Activated B cell treated with CpG ODN at 0.5 μM for 24 hours (primary cell): ENCODE measurements at regions of chr5 and their contacts with region 1.

Region 1: DNA sequence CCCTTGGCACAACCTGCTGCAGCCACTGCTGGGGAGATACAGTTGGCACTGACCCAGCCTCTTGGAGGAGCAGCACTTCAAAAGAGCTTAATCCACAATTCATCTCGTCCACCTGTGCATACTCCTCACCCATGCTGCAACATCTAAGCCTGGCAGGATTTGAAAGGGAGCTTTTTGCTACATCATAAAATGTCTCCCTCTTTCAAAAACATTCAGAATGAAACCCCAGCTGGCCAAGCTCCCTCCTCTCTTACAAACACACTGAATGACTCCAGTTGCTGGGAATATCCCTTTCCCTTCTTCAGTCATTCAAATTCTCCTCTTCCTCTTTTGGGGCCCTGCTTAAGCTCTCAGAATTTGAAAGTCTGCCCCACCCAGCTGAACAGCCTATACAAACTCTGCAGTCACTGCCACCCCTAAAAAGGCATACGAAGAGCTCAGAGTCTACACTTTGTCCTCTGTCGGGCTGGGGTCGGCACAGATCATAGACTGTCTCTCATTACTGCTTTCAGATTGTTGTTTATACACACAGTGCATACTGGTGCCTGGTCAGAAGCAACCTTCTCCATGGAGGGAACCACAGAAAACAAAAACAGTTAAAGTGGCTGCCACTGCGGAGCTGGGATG is 8.8 kb upstream of the C5orf15 start:
- DNase-seq: no peak
- ATAC-seq: peak; percentile 54
- H3K4me3 Mint-ChIP-seq: no peak overlapping the region
- H3K27ac Mint-ChIP-seq: peak overlapping the region; percentile 68
- H3K4me1 Mint-ChIP-seq: peaks cover 29% of the 10 kb centered on the region
- H3K27me3 Mint-ChIP-seq: no peaks in the 10 kb centered on the region
- CTCF ChIP-seq: no peak

Region 2: DNA sequence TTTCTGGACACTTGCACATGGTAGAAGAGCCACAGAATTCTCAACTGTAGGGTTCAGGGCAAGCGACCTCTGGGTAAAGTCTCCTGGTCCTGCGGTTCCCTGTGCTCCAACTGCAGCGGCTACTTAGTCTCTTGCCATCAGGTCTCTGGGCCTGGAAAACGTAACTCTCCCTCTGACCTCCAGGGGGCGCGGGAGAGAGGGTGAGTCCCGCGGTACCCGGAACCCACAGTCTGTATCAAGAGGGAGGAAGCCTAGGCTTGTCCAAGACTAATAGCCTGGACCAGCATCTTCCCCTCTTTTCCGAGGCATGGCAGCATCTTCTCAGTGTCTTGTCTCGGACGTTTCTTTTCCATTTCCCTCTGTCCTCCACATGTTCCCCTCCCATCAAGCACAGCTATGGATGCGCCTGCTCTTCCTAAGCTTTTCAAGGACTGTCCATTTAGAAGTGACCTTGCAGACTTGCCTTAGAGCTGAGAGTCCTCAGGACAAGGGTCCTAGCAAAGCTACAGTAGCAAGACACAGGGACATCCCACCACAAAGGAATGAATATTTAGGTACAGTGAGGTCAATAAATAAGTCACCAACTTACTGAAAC is 424.2 kb before region 1 on chr5:
- CTCF ChIA-PET with region 1: interaction called, 4 read pairs
- POLR2A ChIA-PET with region 1: no interaction called
- intact Hi-C with region 1: loop called (anchors 2 kb)
- DNase-seq: peak; percentile 46
- ATAC-seq: peak; percentile 71
- H3K4me3 Mint-ChIP-seq: no peak overlapping the region
- H3K27ac Mint-ChIP-seq: no peak overlapping the region
- H3K4me1 Mint-ChIP-seq: no peaks in the 10 kb centered on the region
- H3K27me3 Mint-ChIP-seq: peaks cover 33% of the 10 kb centered on the region
- CTCF ChIP-seq: no peak

Region 3: DNA sequence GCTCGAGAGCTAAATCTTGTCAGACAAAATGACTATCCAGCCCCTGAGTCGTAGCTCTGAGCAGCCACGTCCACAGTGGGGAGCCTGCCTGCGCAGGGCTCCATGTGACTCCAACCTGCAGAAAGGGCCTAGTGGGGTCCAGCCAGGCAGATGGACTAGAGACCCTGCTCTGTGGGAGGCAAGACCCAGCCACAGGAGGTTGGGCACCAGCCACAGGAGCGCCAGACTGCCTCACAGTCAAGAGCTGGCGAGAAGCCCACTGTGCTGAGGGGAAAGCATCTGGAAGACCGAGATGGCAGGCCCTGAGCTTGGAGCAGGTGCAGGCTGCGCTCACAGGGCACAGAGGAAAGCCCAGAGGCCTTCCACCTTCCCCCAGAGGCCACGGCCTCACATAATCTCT is 70.2 kb before region 1 on chr5:
- CTCF ChIA-PET with region 1: interaction called, 8 read pairs
- POLR2A ChIA-PET with region 1: no interaction called
- intact Hi-C with region 1: loop called (anchors 1 kb)
- DNase-seq: no peak
- ATAC-seq: no peak
- H3K4me3 Mint-ChIP-seq: no peak overlapping the region
- H3K27ac Mint-ChIP-seq: no peak overlapping the region
- H3K4me1 Mint-ChIP-seq: peaks cover 14% of the 10 kb centered on the region
- H3K27me3 Mint-ChIP-seq: no peaks in the 10 kb centered on the region
- CTCF ChIP-seq: no peak

Region 4: GRCh38 chr5:133957591-133957990 is 19.7 kb before region 1 on chr5:
- CTCF ChIA-PET with region 1: interaction called, 3 read pairs
- POLR2A ChIA-PET with region 1: interaction called, 10 read pairs
- intact Hi-C with region 1: no loop called
- DNase-seq: no peak
- ATAC-seq: peak; percentile 82
- H3K4me3 Mint-ChIP-seq: peak overlapping the region; percentile 56
- H3K27ac Mint-ChIP-seq: peak overlapping the region; percentile 86
- H3K4me1 Mint-ChIP-seq: peaks cover 58% of the 10 kb centered on the region
- H3K27me3 Mint-ChIP-seq: no peaks in the 10 kb centered on the region
- CTCF ChIP-seq: no peak